CD8-positive, alpha-beta T cell (primary cell): ENCODE measurements at regions of chr17 and their contacts with region 1.

Region 1: GRCh38 chr17:58344047-58344790 is 7.8 kb downstream of the SUPT4H1 start:
- DNase-seq: peak; percentile 61 to 98 (median 85)
- ATAC-seq: peak; percentile 72
- H3K4me3 ChIP-seq: peak overlapping the region; percentile 53 to 66
- H3K4me3 Mint-ChIP-seq: peak overlapping the region; percentile 81
- H3K27ac ChIP-seq: peak overlapping the region; percentile 79 to 99
- H3K27ac Mint-ChIP-seq: peak overlapping the region; percentile 95
- H3K4me1 ChIP-seq: peaks cover 91% of the 10 kb centered on the region
- H3K4me1 Mint-ChIP-seq: peaks cover 86% of the 10 kb centered on the region
- H3K27me3 ChIP-seq: no peaks in the 10 kb centered on the region
- H3K27me3 Mint-ChIP-seq: no peaks in the 10 kb centered on the region
- CTCF ChIP-seq: no peak

Region 2: DNA sequence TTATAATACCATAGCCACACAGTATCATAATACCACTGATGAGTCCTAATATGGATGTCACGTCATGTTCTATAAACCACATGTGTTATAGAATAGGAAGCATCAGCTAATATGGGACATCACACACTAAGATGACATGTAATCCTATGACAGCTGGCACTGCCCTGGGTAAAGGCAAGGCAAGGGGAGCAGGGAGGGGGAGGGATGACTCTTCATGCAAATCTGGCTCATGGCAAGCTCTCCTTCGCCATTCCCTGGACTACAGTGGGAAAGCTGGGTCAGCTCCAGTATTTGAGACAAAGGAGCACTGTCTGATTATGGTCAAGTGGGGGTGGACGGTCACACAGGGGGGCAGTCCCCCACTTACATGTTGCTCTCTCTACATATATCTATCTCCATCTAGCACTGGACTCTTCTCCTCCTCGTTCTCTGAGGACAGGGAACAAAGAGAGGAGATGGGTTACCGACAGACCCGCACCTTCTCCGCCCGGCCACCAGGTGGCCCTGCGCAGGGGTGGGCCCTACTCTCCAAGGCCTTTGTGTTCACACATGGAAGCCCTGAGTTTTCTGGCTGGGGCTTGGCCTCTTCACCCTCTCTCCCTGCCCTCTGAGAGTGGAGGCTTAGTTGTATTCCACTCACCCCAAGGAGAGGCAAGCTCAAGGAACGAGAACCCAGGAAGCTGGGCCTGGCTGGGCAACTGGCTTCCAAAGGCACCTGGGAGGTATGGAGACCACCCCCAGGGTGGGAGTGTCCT is 40.1 kb before region 1 on chr17:
- CTCF ChIA-PET with region 1: interaction called, 26 read pairs
- POLR2A ChIA-PET with region 1: no interaction called
- intact Hi-C with region 1: loop called in 1 of 2 experiments (anchors 1 kb)
- DNase-seq: peak; percentile 35 to 73 (median 57)
- ATAC-seq: peak; percentile 97
- H3K4me3 ChIP-seq: no peak overlapping the region
- H3K4me3 Mint-ChIP-seq: no peak overlapping the region
- H3K27ac ChIP-seq: no peak overlapping the region
- H3K27ac Mint-ChIP-seq: no peak overlapping the region
- H3K4me1 ChIP-seq: peaks cover 6% of the 10 kb centered on the region
- H3K4me1 Mint-ChIP-seq: peaks cover 6% of the 10 kb centered on the region
- H3K27me3 ChIP-seq: no peaks in the 10 kb centered on the region
- H3K27me3 Mint-ChIP-seq: no peaks in the 10 kb centered on the region
- CTCF ChIP-seq: peak; percentile 74

Region 3: GRCh38 chr17:58329035-58329809 is 15.0 kb before region 1 on chr17:
- CTCF ChIA-PET with region 1: interaction called, 587 read pairs
- POLR2A ChIA-PET with region 1: interaction called, 773 read pairs
- intact Hi-C with region 1: loop called (anchors 1 kb)
- DNase-seq: peak in 8 of 9 experiments; percentile 56 to 90 (median 77)
- ATAC-seq: peak; percentile 36
- H3K4me3 ChIP-seq: peak overlapping the region; percentile 90 to 99
- H3K4me3 Mint-ChIP-seq: peak overlapping the region; percentile 92
- H3K27ac ChIP-seq: peak overlapping the region; percentile 48 to 99
- H3K27ac Mint-ChIP-seq: peak overlapping the region; percentile 96
- H3K4me1 ChIP-seq: peaks cover 47% of the 10 kb centered on the region
- H3K4me1 Mint-ChIP-seq: peaks cover 54% of the 10 kb centered on the region
- H3K27me3 ChIP-seq: no peaks in the 10 kb centered on the region
- H3K27me3 Mint-ChIP-seq: no peaks in the 10 kb centered on the region
- CTCF ChIP-seq: peak; percentile 84

Region 4: GRCh38 chr17:58364270-58364942 is 20.2 kb after region 1 on chr17:
- CTCF ChIA-PET with region 1: interaction called, 11 read pairs
- POLR2A ChIA-PET with region 1: interaction called, 5 read pairs
- intact Hi-C with region 1: no loop called
- DNase-seq: no peak
- ATAC-seq: no peak
- H3K4me3 ChIP-seq: no peak overlapping the region
- H3K4me3 Mint-ChIP-seq: no peak overlapping the region
- H3K27ac ChIP-seq: no peak overlapping the region
- H3K27ac Mint-ChIP-seq: no peak overlapping the region
- H3K4me1 ChIP-seq: peaks cover 3% of the 10 kb centered on the region
- H3K4me1 Mint-ChIP-seq: peaks cover 13% of the 10 kb centered on the region
- H3K27me3 ChIP-seq: no peaks in the 10 kb centered on the region
- H3K27me3 Mint-ChIP-seq: no peaks in the 10 kb centered on the region
- CTCF ChIP-seq: no peak

Region 5: GRCh38 chr17:58417300-58418092 is 73.3 kb after region 1 on chr17 and contains the start of gene RNF43:
- CTCF ChIA-PET with region 1: interaction called, 21 read pairs
- POLR2A ChIA-PET with region 1: interaction called, 18 read pairs
- intact Hi-C with region 1: no loop called
- DNase-seq: peak; percentile 70 to 96 (median 87)
- ATAC-seq: peak; percentile 100
- H3K4me3 ChIP-seq: no peak within 1 kb of the TSS
- H3K4me3 Mint-ChIP-seq: no peak within 1 kb of the TSS
- H3K27ac ChIP-seq: peak within 1 kb of the TSS in 1 of 2 experiments; percentile 47
- H3K27ac Mint-ChIP-seq: peak within 1 kb of the TSS; percentile 3
- H3K4me1 ChIP-seq: peaks cover 15% of the 10 kb centered on the region
- H3K4me1 Mint-ChIP-seq: peaks cover 17% of the 10 kb centered on the region
- H3K27me3 ChIP-seq: no peaks in the 10 kb centered on the region
- H3K27me3 Mint-ChIP-seq: no peaks in the 10 kb centered on the region
- CTCF ChIP-seq: peak; percentile 75
- total RNA-seq, gene RNF43: 0.61 to 1.0 TPM

Region 6: GRCh38 chr17:58447039-58447975 is 103.1 kb after region 1 on chr17:
- CTCF ChIA-PET with region 1: no interaction called
- POLR2A ChIA-PET with region 1: no interaction called
- intact Hi-C with region 1: loop called in 1 of 2 experiments (anchors 1 kb)
- DNase-seq: peak; percentile 20 to 79 (median 58)
- ATAC-seq: no peak
- H3K4me3 ChIP-seq: no peak overlapping the region
- H3K4me3 Mint-ChIP-seq: no peak overlapping the region
- H3K27ac ChIP-seq: no peak overlapping the region
- H3K27ac Mint-ChIP-seq: no peak overlapping the region
- H3K4me1 ChIP-seq: no peaks in the 10 kb centered on the region
- H3K4me1 Mint-ChIP-seq: peaks cover 3% of the 10 kb centered on the region
- H3K27me3 ChIP-seq: no peaks in the 10 kb centered on the region
- H3K27me3 Mint-ChIP-seq: no peaks in the 10 kb centered on the region
- CTCF ChIP-seq: peak; percentile 60